ENCODE measurements at regions of chrX and their contacts with region 1.

Region 1: DNA sequence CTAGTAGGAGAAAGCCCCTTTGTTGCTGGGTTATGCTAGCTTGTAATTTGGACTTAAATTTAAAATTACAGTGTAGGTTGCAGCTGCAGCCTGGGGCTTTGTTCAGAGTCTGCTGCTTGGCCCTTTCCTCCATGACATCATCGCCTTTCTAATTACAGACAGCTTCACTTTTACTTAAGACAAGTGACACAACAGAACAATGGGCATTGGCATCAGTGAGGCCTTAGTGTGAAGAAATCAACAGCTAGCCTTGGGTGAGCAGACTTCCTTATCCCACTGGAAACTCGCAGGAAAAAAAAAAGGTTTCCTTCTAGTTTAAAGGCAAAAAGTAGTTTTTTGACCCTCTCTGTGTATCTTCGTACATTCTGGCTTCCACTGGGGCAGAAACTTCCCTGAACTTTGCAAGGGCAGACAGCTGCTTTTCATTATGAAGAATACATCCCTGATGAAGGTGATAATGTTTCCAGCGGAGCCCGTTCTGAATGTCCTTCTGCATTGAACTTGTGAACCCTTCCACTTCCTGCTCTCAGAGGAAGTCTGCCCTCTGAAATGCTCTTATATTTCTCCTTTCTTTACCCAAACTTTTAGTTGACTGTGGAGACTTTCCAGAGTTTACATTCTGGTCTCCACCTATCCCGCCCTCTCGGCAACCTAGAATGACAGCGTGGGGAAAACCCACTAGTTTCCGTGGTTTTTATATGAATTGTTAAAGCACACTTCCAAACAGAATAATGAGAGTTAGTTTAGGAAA is 123.2 kb upstream of the FAM9C start:
- DNase-seq: peak in 2 of 5 donors; percentile 24 to 46
- ATAC-seq: peak; percentile 32 to 92 (median 84)
- H3K4me3 ChIP-seq: peak overlapping the region in 1 of 12 donors; percentile 9
- H3K27ac ChIP-seq: peak overlapping the region; percentile 27 to 83 (median 72)
- H3K4me1 ChIP-seq: peaks cover 0 to 33% (median 13%) of the 10 kb centered on the region in 12 donors
- H3K27me3 ChIP-seq: no peaks in the 10 kb centered on the region
- CTCF ChIP-seq: no peak
- POLR2A ChIP-seq: no peak

Region 2: GRCh38 chrX:13101441-13102139 is 66.1 kb before region 1 on chrX:
- intact Hi-C with region 1: loop called in 1 of 10 experiments (anchors 5 kb)
- DNase-seq: peak; percentile 60 to 81 (median 67)
- ATAC-seq: peak; percentile 89 to 100 (median 98)
- H3K4me3 ChIP-seq: no peak overlapping the region
- H3K27ac ChIP-seq: peak overlapping the region; percentile 49 to 85 (median 68)
- H3K4me1 ChIP-seq: peaks cover 0 to 48% (median 17%) of the 10 kb centered on the region in 12 donors
- H3K27me3 ChIP-seq: peaks cover 0 to 3% (median 0%) of the 10 kb centered on the region in 9 donors
- CTCF ChIP-seq: no peak
- POLR2A ChIP-seq: no peak

Region 3: DNA sequence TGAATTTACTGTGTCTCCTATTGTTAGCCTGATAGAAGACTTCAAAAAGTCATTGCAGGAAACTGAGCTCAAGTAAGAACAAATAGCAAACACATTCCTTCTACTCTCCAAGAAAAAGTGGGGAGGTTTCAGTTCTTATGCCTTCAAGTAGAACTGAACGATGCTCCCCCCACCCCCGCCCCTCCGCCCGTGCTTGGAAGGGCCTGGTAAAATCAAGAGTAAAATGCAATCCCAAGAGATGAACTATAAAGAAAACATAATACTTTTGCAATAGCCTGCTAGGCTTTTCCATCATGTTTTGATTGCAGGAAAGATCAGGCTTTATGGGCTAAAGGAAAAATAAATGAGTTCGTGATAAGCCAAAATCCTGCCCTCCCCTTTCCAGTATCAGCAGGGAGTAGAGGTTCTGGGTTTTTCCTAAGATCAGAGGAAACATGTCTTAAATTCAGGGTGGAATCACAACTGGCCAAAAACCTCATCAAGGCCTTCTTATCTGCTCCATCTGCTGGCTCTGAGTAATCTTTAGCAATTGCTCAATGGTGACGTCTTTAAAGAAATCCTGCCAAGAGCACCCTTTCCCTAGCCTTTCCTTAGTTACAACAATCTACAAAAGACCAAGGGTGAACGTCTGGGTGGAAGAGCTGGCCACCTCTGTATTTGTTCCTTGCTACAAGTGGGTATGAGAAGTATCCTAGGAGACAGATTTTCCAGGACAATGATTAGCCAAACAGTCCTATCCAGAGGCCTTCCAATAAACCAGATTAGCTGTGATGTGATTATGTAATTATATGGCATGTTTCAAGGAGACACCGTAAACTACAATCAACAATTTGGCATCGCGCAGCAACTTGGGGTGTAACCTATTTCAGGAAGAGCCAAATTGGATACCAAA is 57.0 kb before region 1 on chrX:
- intact Hi-C with region 1: loop called in 3 of 10 experiments (anchors 5 to 10 kb)
- DNase-seq: peak in 3 of 5 donors; percentile 38 to 42 (median 38)
- ATAC-seq: peak; percentile 81 to 93 (median 90)
- H3K4me3 ChIP-seq: no peak overlapping the region
- H3K27ac ChIP-seq: peak overlapping the region; percentile 33 to 86 (median 72)
- H3K4me1 ChIP-seq: peaks cover 0 to 29% (median 6%) of the 10 kb centered on the region in 12 donors
- H3K27me3 ChIP-seq: no peaks in the 10 kb centered on the region
- CTCF ChIP-seq: no peak
- POLR2A ChIP-seq: peak in 1 of 2 donors; percentile 15

Region 4: GRCh38 chrX:13123857-13124345 is 43.8 kb before region 1 on chrX:
- intact Hi-C with region 1: loop called in 3 of 10 experiments (anchors 5 to 10 kb)
- DNase-seq: no peak
- ATAC-seq: peak in 1 of 4 donors; percentile 34
- H3K4me3 ChIP-seq: no peak overlapping the region
- H3K27ac ChIP-seq: peak overlapping the region in 8 of 12 donors; percentile 25 to 82 (median 60)
- H3K4me1 ChIP-seq: peaks cover 0 to 48% (median 5%) of the 10 kb centered on the region in 12 donors
- H3K27me3 ChIP-seq: peaks cover 0 to 12% (median 0%) of the 10 kb centered on the region in 9 donors
- CTCF ChIP-seq: no peak
- POLR2A ChIP-seq: no peak

Region 5: DNA sequence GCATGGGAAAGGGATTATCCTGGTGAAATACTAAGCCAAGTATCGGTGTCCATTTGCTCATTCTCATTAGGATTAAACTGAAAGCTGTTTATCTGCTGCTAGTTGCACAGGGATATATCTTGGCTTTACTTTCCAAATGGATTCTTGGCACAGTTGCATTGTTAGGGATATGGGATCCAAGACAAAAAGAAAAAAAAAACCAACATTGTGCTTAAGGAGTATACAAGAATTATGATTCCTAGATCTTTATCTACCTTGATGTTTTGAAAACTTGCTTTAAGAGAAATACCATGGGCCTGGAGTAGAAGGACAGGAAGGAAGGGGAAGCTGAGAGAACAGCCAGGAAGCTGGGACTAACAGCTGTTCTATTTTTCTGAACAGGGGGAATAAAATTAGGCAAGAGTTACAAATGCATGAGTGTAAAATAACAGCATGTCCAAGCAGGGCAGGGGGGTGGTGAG is 44.6 kb after region 1 on chrX:
- intact Hi-C with region 1: loop called in 1 of 10 experiments (anchors 10 kb)
- DNase-seq: no peak
- ATAC-seq: peak; percentile 26 to 77 (median 62)
- H3K4me3 ChIP-seq: no peak overlapping the region
- H3K27ac ChIP-seq: peak overlapping the region in 10 of 12 donors; percentile 0 to 57 (median 34)
- H3K4me1 ChIP-seq: peaks cover 0 to 26% (median 3%) of the 10 kb centered on the region in 12 donors
- H3K27me3 ChIP-seq: no peaks in the 10 kb centered on the region
- CTCF ChIP-seq: no peak
- POLR2A ChIP-seq: no peak

Region 6: DNA sequence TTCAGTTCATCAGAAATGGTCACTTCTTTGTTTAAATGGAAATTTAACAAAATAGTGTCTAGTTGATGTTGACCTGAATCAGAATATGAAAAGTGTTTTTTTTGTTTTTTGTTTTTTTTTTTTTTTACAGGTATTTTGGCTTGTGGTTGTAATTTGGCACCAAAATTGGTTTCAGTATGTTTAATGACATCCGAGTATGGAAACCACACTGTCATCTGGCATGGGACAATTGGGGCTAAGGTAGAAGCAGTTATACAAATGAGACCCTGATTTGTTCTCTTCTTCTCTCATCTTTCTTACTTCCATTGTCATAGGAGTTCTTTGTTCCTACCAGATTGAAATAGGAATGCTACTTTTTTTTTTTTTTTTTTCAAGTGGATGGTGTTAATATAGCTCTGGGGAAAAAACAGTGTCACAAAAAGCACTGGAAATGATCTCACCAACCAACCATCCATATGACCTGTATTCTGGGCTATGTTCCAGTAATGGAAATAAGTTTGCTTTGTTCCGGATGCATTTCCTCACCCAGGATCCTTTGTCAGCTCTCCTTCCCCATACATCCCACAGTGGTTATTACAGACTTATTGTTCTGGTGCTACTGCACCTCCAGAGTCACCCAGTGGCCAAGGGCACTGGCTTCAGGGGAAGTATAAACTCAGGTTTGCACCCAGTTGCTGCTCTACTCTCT is 56.4 kb after region 1 on chrX:
- intact Hi-C with region 1: loop called in 2 of 10 experiments (anchors 5 to 10 kb)
- DNase-seq: peak in 2 of 5 donors; percentile 20 to 25
- ATAC-seq: peak; percentile 78 to 90 (median 86)
- H3K4me3 ChIP-seq: no peak overlapping the region
- H3K27ac ChIP-seq: peak overlapping the region in 7 of 12 donors; percentile 2 to 65 (median 42)
- H3K4me1 ChIP-seq: peaks cover 0 to 20% (median 2%) of the 10 kb centered on the region in 12 donors
- H3K27me3 ChIP-seq: peaks cover 0 to 8% (median 0%) of the 10 kb centered on the region in 9 donors
- CTCF ChIP-seq: peak in 2 of 12 donors; percentile 8 to 9
- POLR2A ChIP-seq: no peak

Region 7: GRCh38 chrX:13322804-13323203 is 155.1 kb after region 1 on chrX:
- intact Hi-C with region 1: no loop called
- DNase-seq: no peak
- ATAC-seq: no peak
- H3K4me3 ChIP-seq: no peak overlapping the region
- H3K27ac ChIP-seq: no peak overlapping the region
- H3K4me1 ChIP-seq: no peaks in the 10 kb centered on the region
- H3K27me3 ChIP-seq: peaks cover 0 to 3% (median 0%) of the 10 kb centered on the region in 9 donors
- CTCF ChIP-seq: no peak
- POLR2A ChIP-seq: no peak